Dendritic cell treated with granulocyte-macrophage colony-stimulating factor and Interleukin-4, amounts not matched to agents 40 ng/mL and 50 ng/mL, for 4 days (primary cell): ENCODE measurements at regions of chr22 and their contacts with region 1.

Region 1: GRCh38 chr22:31749636-31750364 is at the start of gene PRR14L:
- H3K4me3 Mint-ChIP-seq: peak within 1 kb of the TSS; percentile 85
- H3K27ac Mint-ChIP-seq: peak within 1 kb of the TSS; percentile 97
- H3K4me1 Mint-ChIP-seq: peaks cover 63% of the 10 kb centered on the region
- H3K27me3 Mint-ChIP-seq: no peaks in the 10 kb centered on the region

Region 2: GRCh38 chr22:31661851-31662656 is 87.7 kb before region 1 on chr22 and contains the start of gene PISD:
- intact Hi-C with region 1: loop called (anchors 5 kb)
- H3K4me3 Mint-ChIP-seq: peak within 1 kb of the TSS; percentile 90
- H3K27ac Mint-ChIP-seq: peak within 1 kb of the TSS; percentile 90
- H3K4me1 Mint-ChIP-seq: peaks cover 19% of the 10 kb centered on the region
- H3K27me3 Mint-ChIP-seq: no peaks in the 10 kb centered on the region

Region 3: DNA sequence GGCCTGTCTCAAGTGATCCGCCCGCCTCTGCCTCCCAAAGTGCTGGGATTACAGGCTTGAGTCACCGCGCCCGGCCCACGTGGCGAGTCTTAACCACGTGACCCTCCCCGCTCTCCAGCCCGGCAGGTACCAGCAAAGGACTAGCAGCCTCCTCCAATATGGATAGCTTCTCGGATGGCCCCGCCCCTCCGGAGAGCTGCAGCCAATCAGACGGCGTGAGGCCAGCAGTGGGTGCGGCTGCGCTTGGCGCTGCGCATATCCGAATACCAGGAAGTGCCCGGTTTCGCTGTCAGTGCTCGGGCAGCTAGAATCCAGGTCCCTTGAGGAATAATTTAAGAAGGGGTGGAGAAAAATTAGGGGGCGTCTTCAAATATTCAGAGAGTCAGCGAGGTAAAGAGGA is 73.1 kb before region 1 on chr22:
- intact Hi-C with region 1: loop called (anchors 5 kb)
- H3K4me3 Mint-ChIP-seq: peak overlapping the region; percentile 79
- H3K27ac Mint-ChIP-seq: peak overlapping the region; percentile 90
- H3K4me1 Mint-ChIP-seq: peaks cover 21% of the 10 kb centered on the region
- H3K27me3 Mint-ChIP-seq: no peaks in the 10 kb centered on the region

Region 4: DNA sequence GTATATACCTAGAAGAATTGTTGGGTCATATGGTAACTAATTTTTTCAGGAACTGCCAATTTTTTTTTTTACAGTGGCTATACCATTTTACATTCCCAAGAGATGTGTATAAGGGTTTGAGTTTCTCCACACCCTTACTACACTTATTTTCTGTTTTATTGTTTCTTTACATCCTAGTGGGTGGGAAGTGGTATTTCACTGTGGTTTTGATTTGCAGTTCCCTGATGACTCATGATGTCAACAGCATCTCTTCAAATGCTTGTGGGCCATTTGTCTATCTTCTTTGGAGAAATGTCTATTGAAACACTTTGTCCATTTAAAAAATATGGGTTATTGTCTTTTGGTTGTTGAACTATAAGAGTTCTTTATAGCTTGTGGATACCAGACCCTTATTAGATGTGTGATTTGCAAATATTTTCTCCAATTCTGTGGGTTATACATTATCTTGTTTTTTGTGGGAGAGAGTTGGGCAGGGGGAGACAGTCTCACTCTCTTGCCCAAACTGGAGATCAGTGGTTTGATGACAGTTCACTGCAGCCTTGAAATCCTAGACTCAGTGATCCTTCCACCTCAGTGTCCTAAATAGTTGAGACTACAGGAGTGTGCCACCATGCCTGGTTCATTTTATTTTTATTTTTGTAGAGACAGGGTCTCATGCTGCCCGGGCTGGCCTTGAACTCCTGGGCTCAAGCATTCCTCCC is 57.5 kb before region 1 on chr22:
- intact Hi-C with region 1: no loop called
- H3K4me3 Mint-ChIP-seq: no peak overlapping the region
- H3K27ac Mint-ChIP-seq: no peak overlapping the region
- H3K4me1 Mint-ChIP-seq: peaks cover 16% of the 10 kb centered on the region
- H3K27me3 Mint-ChIP-seq: no peaks in the 10 kb centered on the region